Activated T-helper 2 cell treated with anti-CD3 and anti-CD28 coated beads, Interferon-gamma antibody, Interleukin-2, Interleukin-4, amounts not matched to agents 10 μg/mL and 5 μg/mL and 100 μg/mL, durations not matched to agents 14 hours and 24 hours and 36 hours (primary cell): ENCODE measurements at regions of chr14 and their contacts with region 1.

Region 1: GRCh38 chr14:90256354-90257131 is at the start of gene PSMC1:
- DNase-seq: peak; percentile 83
- H3K4me3 Mint-ChIP-seq: peak within 1 kb of the TSS; percentile 98
- H3K27ac Mint-ChIP-seq: peak within 1 kb of the TSS; percentile 93
- H3K4me1 Mint-ChIP-seq: peaks cover 19% of the 10 kb centered on the region
- H3K27me3 Mint-ChIP-seq: no peaks in the 10 kb centered on the region
- total RNA-seq, gene PSMC1: 162 and 167 TPM in 2 replicates

Region 2: DNA sequence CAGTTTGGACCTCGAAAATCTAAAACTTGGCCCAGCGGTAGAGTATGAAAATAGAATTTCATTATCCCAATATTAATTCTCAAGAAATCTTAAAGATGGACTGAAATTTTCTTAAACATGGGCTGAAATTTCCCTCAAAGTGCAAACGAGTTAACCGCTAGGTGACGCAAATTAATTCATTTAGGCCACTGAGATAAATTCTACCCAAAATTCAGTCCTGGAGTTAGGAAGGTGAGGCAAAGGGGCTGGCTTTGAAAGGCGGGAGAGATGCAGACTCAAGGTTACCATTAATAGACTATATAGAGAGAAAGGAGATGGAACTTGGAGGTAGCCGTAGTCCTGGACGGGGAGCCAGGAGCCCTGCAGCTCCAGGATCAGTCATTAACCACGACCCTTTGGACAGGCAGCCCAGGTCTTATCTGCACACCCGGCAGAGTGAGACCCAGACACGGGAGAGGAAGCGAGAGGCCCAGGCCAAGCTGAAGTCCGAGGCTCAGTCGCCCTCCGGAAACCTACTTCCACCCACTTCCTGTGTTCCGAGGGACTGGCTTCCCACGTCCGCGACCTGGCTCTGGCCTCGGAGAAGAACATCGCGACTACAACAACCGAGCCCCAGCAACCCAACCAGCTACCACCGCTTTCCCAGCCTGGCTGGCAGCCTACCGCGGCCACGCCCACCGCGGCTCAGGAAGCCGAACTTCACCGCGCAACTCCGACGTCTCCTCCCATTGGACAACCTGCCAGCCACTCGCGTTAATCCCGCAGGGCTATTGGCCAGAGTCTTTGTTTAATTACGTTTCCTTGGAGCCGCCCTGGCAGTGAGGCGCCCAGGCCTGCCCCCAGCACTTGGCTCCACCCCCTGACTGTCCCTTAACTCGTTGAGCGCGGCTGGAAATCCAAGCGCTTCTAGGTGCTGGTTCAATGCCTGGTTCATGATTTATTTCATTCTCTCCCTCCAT is 302.2 kb before region 1 on chr14 and contains the start of gene EFCAB11:
- intact Hi-C with region 1: loop called (anchors 5 kb)
- DNase-seq: peak; percentile 96
- H3K4me3 Mint-ChIP-seq: peak within 1 kb of the TSS; percentile 87
- H3K27ac Mint-ChIP-seq: peak within 1 kb of the TSS; percentile 81
- H3K4me1 Mint-ChIP-seq: peaks cover 43% of the 10 kb centered on the region
- H3K27me3 Mint-ChIP-seq: no peaks in the 10 kb centered on the region
- total RNA-seq, gene EFCAB11: 7.1 and 9.0 TPM in 2 replicates

Region 3: DNA sequence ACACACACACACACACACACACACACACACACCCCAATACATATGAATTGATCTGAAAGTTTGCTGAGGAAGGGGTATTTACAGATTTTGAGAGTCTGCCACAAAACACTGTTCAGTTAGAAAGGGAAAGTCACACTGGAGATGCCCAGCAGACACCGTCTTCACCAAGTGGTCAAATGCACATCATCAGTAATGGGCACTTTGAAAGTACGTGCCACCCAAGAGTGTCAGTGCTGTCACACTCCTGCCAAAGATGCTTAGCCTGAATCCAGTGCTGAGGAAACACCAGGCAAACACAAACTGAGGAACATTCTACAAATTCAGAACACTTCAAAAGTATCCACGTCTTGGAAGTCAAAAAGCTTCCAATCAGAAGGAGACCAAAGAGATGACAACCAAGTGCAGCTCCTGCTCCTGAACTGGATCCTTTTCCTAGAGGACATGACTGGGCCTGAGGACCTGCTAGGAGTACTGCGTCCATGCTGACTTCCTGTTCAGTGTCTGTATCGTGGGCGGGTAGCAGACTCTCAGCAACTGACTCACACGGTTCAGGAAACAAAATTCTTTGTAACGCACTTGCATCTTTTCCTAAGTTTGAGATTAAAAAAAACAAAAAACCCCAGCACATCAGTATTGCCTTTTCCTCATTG is 18.4 kb after region 1 on chr14:
- intact Hi-C with region 1: loop called (anchors 2 kb)
- DNase-seq: no peak
- H3K4me3 Mint-ChIP-seq: no peak overlapping the region
- H3K27ac Mint-ChIP-seq: peak overlapping the region; percentile 79
- H3K4me1 Mint-ChIP-seq: peaks cover 17% of the 10 kb centered on the region
- H3K27me3 Mint-ChIP-seq: no peaks in the 10 kb centered on the region

Region 4: DNA sequence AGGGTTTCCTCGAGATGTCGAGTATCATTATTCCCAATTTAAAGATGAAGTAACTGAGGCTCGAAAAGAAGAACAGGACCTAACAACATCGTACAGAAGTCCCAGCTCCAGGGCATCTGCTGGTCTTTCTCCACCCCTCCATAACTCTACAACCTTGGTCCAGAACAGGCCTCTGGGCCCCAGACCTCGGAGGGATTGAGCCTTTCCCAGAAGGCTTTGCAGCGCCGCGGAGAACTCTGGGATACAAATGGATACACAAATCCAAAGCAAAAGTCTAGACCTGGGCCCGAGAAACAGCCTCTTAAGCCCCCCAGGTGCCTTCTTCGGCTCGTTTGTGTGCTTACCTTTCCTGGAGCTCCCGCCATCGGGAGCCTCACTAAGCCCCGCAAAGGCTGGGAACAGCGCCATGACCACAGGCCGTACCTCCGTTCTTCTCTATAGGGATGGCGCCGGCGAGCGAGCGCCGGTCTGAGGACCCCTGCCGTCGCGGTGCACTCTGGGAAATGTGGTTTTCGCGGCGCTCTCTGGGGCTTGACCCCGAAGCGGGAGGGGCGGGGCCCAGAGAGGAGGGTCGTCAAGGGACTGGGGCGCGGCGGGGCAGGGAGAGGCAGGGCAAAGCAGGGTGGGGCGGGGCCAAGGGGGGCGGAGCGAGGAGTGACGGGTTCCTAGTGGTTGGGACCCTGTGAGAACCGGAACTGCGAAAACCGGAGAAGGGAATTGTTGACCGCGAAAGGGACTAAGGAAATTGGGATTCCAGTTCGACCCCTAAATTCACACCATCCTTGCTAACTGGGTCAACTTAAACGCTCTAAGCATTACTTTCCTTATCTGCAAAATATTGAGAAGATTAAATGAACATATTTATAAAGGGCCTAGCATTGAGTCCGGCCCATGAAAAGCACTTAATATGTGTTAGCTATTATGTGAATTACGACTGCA is 75.2 kb after region 1 on chr14 and contains the start of gene NRDE2:
- intact Hi-C with region 1: loop called (anchors 5 kb)
- DNase-seq: peak; percentile 91
- H3K4me3 Mint-ChIP-seq: peak within 1 kb of the TSS; percentile 89
- H3K27ac Mint-ChIP-seq: peak within 1 kb of the TSS; percentile 93
- H3K4me1 Mint-ChIP-seq: peaks cover 29% of the 10 kb centered on the region
- H3K27me3 Mint-ChIP-seq: peaks cover 20% of the 10 kb centered on the region
- total RNA-seq, gene NRDE2: 23.2 and 25.4 TPM in 2 replicates